ENCODE measurements at regions of chr13 and their contacts with region 1.

Region 1: DNA sequence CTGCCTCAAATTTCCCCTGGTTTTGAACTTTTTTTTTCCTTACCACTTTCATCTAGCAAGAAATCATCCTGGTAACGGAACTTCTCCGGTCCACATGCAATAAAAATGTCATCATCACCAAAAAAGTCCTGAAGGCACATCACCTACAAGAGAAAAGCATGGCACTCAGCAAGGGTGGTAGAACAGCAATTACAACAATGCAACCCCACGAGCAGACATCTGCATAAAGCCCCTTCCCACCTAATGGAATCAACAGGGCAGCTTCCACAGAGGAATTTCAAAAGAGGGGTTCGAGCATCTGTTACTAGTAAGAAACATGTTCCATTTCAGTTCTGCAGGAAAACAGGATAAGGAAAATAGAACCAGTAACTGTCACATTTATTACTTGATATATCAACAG is 183.9 kb downstream of the DCLK1 start:
- DNase-seq: no peak
- H3K4me3 ChIP-seq: no peak overlapping the region
- H3K27ac ChIP-seq: peak overlapping the region in 1 of 2 donors; percentile 5
- H3K4me1 ChIP-seq: no peaks in the 10 kb centered on the region
- H3K27me3 ChIP-seq: no peaks in the 10 kb centered on the region
- CTCF ChIP-seq: no peak
- POLR2A ChIP-seq: no peak

Region 2: GRCh38 chr13:35552172-35552844 is 395.0 kb before region 1 on chr13:
- intact Hi-C with region 1: loop called (anchors 5 kb)
- DNase-seq: no peak
- H3K4me3 ChIP-seq: no peak overlapping the region
- H3K27ac ChIP-seq: no peak overlapping the region
- H3K4me1 ChIP-seq: no peaks in the 10 kb centered on the region
- H3K27me3 ChIP-seq: no peaks in the 10 kb centered on the region
- CTCF ChIP-seq: no peak
- POLR2A ChIP-seq: no peak

Region 3: GRCh38 chr13:35957996-35958395 is 10.7 kb after region 1 on chr13:
- intact Hi-C with region 1: loop called (anchors 1 kb)
- DNase-seq: no peak
- H3K4me3 ChIP-seq: no peak overlapping the region
- H3K27ac ChIP-seq: peak overlapping the region; percentile 40 to 85
- H3K4me1 ChIP-seq: no peaks in the 10 kb centered on the region
- H3K27me3 ChIP-seq: no peaks in the 10 kb centered on the region
- CTCF ChIP-seq: no peak
- POLR2A ChIP-seq: no peak

Measured in breast epithelium (tissue), 4 donors.